Activated CD8-positive, alpha-beta T cell treated with anti-CD3 and anti-CD28 coated beads for 36 hours (primary cell): ENCODE measurements at regions of chr1 and their contacts with region 1.

Region 1: DNA sequence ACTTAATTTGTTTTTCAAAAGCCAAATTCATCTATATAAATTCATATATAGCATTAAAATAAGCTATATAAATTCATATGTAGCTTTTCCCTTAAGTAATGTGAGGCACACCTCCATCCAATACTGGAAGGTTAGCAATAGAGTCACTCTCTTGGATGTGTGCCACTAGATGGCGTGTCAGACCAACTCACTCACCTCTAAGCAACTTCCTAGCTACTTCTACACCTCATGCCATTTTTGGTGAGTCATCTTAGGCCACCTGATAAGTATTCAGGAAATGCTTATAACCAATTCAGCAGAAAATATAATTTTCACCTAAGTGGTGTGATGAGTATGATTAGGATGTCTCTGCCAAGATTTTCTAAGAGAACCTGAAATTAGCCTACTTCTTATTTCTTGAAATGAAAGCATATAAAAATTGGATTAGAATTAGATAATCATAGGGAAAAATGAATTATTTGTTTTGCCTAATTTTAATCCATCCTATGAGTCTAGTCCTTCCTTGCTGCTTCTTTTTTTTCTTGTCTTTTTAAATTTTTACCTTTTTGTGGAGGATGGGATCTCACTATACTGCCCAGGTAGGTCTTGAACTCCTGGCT is 34.4 kb upstream of the TADA1 start:
- DNase-seq: peak; percentile 89
- ATAC-seq: peak; percentile 94
- H3K4me3 Mint-ChIP-seq: no peak overlapping the region
- H3K27ac Mint-ChIP-seq: no peak overlapping the region
- H3K4me1 Mint-ChIP-seq: peaks cover 14% of the 10 kb centered on the region
- H3K27me3 Mint-ChIP-seq: peaks cover 4% of the 10 kb centered on the region
- CTCF ChIP-seq: peak; percentile 82

Region 2: DNA sequence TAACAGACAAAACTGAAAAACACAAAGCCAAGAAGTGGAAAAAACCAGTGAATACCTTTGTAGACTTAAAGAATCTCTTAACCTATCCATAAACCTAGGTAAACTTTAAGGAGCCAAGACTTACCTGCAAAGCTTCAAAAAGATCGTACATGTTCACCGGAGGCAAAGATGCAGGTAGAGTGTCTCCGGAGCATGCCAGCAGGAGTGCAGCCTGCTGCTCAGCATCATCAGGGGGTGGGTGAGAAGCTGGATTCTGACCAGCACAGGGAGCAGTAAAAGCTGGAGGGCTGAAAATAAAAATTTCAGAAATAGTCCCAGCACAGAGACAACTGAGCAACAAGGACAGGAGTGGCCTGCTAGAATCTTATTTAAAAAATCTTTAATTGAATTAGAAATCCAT is 52.5 kb before region 1 on chr1:
- CTCF ChIA-PET with region 1: no interaction called
- POLR2A ChIA-PET with region 1: no interaction called
- intact Hi-C with region 1: no loop called
- DNase-seq: no peak
- ATAC-seq: no peak
- H3K4me3 Mint-ChIP-seq: no peak overlapping the region
- H3K27ac Mint-ChIP-seq: no peak overlapping the region
- H3K4me1 Mint-ChIP-seq: peaks cover 15% of the 10 kb centered on the region
- H3K27me3 Mint-ChIP-seq: no peaks in the 10 kb centered on the region
- CTCF ChIP-seq: no peak

Region 3: GRCh38 chr1:166875734-166876539 is 34.6 kb before region 1 on chr1 and contains the start of gene TADA1:
- CTCF ChIA-PET with region 1: interaction called, 12 read pairs
- POLR2A ChIA-PET with region 1: no interaction called
- intact Hi-C with region 1: no loop called
- DNase-seq: peak; percentile 100
- ATAC-seq: peak; percentile 92
- H3K4me3 Mint-ChIP-seq: peak within 1 kb of the TSS; percentile 92
- H3K27ac Mint-ChIP-seq: peak within 1 kb of the TSS; percentile 99
- H3K4me1 Mint-ChIP-seq: peaks cover 42% of the 10 kb centered on the region
- H3K27me3 Mint-ChIP-seq: peaks cover 4% of the 10 kb centered on the region
- CTCF ChIP-seq: no peak
- total RNA-seq, gene TADA1: 14.3 to 15.7 TPM

Region 4: GRCh38 chr1:166920561-166921475 is 10.3 kb after region 1 on chr1:
- CTCF ChIA-PET with region 1: interaction called, 23 read pairs
- POLR2A ChIA-PET with region 1: no interaction called
- intact Hi-C with region 1: no loop called
- DNase-seq: peak; percentile 12
- ATAC-seq: peak; percentile 27
- H3K4me3 Mint-ChIP-seq: peak overlapping the region; percentile 28
- H3K27ac Mint-ChIP-seq: no peak overlapping the region
- H3K4me1 Mint-ChIP-seq: peaks cover 2% of the 10 kb centered on the region
- H3K27me3 Mint-ChIP-seq: peaks cover 36% of the 10 kb centered on the region
- CTCF ChIP-seq: no peak

Region 5: DNA sequence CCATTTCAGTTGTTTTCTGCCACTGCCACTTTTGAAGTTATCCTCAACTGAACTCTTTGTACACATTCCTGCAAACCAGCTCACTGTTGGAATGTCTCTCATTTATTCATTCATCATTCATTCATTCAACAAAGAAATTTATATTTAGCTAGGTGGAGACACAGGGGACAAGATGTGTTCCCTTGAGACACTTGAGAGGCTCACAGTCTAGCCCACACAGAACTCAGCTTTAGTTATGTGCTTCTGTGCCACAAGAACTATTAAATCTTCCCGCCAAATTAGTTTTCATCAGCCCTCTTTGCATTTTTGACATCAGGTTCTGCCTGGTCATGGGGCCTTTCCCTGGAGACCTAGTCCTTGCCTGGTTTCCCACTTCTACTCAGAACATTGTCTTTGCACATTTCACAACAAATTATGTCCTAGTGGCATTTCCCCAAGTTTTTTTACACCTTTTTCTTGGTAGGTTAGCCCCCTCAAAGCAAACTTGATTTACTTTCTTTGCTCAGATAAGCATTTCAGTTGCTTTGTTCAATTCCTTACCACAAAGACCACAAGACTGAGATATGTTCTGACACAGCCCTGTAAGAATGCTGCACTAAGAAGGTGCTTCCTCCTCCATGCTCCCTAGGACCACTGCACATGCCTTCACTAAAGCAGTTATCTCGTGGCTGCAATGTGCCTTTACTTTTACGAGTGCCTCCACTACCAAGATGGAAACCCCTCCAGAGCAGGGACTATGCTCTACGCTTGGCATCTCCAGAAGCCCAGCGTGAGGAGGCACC is 33.9 kb after region 1 on chr1:
- CTCF ChIA-PET with region 1: interaction called, 13 read pairs
- POLR2A ChIA-PET with region 1: interaction called, 3 read pairs
- intact Hi-C with region 1: no loop called
- DNase-seq: no peak
- ATAC-seq: peak; percentile 82
- H3K4me3 Mint-ChIP-seq: no peak overlapping the region
- H3K27ac Mint-ChIP-seq: no peak overlapping the region
- H3K4me1 Mint-ChIP-seq: peaks cover 31% of the 10 kb centered on the region
- H3K27me3 Mint-ChIP-seq: peaks cover 22% of the 10 kb centered on the region
- CTCF ChIP-seq: no peak

Region 6: DNA sequence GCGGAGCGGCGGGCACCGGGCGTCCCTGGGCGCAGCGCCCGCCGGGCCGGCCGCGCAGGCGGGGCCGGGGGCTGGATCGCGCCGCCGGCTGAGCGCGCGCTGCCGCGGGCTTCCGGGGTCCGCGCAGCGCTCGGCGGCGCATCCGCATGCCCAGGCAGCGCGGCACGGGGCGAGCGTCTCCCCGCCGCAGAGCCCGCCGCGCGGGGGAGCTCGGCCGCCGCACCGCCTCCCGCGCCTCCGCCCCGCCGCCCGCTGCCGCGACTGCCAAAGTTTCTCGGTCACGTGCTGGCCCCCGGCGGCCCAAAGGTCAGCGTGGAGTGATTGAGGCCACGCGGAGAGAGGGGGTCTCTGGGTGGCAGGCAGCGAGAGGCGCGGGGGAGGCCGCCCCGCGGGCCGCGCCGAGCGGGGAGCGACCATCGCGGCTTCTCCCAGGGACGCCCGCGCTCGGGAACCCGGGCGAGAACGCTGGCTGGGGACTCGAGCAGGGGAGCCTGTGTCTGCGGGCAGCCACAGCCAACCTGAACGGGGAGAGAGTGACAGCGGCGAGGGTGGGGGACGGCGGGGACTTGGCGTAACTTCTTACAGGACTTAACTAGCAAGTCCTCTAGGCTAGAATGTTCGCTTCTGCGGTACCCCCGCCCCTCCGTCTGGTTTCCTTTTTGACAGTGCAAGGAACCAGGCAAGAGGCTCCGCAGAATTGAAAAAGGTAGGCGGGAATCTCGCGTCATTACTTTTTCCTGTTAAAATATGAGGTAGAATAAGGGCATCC is 65.0 kb after region 1 on chr1 and contains the start of gene ILDR2:
- CTCF ChIA-PET with region 1: interaction called, 31 read pairs
- POLR2A ChIA-PET with region 1: no interaction called
- intact Hi-C with region 1: loop called (anchors 5 kb)
- DNase-seq: peak; percentile 91
- ATAC-seq: peak; percentile 70
- H3K4me3 Mint-ChIP-seq: peak within 1 kb of the TSS; percentile 89
- H3K27ac Mint-ChIP-seq: peak within 1 kb of the TSS; percentile 90
- H3K4me1 Mint-ChIP-seq: peaks cover 51% of the 10 kb centered on the region
- H3K27me3 Mint-ChIP-seq: peaks cover 26% of the 10 kb centered on the region
- CTCF ChIP-seq: no peak
- total RNA-seq, gene ILDR2: 14.3 to 15.1 TPM

Region 7: DNA sequence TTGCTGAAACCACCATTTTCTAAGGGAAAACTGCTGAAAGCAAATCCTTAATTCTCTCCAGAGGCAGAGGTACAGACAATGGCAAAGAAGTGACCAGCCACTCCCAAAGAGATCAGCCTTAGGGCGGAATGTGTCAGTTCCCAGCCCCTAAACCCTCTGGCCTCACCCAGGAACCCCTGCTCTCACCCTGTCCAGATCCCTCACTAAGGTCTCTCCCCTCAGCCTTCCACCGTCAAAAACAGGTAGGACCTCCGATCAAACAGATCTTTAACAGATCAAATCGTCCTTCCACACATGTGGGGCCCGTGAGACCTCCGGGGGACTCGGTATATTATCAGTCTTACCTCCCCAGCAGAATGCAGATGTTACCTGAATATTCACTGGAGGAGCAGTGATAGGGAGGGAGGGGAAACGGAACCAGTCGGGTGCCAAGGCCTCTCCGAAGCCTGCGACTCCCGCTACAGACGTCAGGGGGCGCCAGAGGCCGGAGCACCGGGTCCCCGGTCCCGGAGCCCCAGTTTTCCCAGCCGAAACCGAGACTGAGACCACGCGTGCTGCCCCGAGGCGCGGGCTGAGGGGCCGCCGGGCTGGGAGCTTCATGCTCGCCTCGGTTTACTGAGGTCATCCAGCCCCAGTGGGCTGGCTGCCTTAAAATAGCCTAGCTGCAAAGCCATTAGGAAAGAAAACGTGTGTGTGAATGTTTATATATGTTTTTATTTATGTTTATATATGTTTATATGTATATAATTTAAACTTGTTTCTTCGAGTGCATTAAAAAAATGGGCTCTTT is 156.0 kb after region 1 on chr1:
- CTCF ChIA-PET with region 1: interaction called, 863 read pairs
- POLR2A ChIA-PET with region 1: no interaction called
- intact Hi-C with region 1: no loop called
- DNase-seq: peak; percentile 83
- ATAC-seq: peak; percentile 99
- H3K4me3 Mint-ChIP-seq: peak overlapping the region; percentile 18
- H3K27ac Mint-ChIP-seq: no peak overlapping the region
- H3K4me1 Mint-ChIP-seq: no peaks in the 10 kb centered on the region
- H3K27me3 Mint-ChIP-seq: no peaks in the 10 kb centered on the region
- CTCF ChIP-seq: peak; percentile 99

Region 8: DNA sequence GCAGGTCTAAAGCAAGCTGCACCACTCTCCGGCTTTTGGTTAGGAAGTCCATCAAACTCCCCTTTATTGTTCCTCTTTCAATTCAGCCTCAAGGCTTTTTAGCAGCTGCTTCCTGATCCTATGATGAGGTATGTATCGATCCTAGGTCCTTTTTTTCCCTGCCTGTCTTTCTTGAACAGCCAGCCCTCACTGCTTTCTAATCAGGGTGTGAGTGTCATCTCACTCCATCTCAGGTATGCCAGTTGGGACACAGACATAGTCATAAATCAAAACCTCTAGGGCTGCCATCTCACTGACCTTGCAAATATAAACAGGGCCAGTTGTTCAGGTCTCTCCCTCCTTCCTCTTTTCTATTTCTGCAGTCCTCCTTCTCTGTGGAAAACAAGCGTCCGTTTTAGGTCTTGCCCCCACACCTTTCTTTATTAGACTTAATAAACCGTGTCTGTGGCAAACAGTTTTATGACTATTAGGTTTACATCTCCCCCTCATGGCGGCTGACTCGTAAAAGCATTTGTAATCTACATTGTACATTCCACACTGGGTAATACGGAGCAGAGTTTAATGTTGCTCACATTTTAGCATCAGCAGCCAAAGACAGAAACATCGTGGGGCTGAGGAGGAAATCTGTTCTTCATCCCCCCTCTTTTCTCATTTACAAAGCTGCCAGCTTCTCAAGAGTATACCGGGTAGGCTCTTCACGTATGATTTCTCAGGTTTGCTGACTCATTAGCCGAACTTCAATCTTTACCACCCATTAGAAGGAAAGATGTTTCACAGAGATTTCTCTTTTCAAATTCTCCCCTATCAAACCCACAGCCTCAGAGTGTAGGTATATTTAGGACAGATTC is 195.0 kb after region 1 on chr1:
- CTCF ChIA-PET with region 1: no interaction called
- POLR2A ChIA-PET with region 1: no interaction called
- intact Hi-C with region 1: no loop called
- DNase-seq: no peak
- ATAC-seq: no peak
- H3K4me3 Mint-ChIP-seq: no peak overlapping the region
- H3K27ac Mint-ChIP-seq: no peak overlapping the region
- H3K4me1 Mint-ChIP-seq: peaks cover 48% of the 10 kb centered on the region
- H3K27me3 Mint-ChIP-seq: no peaks in the 10 kb centered on the region
- CTCF ChIP-seq: no peak

Region 9: GRCh38 chr1:167312871-167313270 is 402.4 kb after region 1 on chr1:
- CTCF ChIA-PET with region 1: no interaction called
- POLR2A ChIA-PET with region 1: no interaction called
- intact Hi-C with region 1: no loop called
- DNase-seq: no peak
- ATAC-seq: peak; percentile 89
- H3K4me3 Mint-ChIP-seq: no peak overlapping the region
- H3K27ac Mint-ChIP-seq: peak overlapping the region; percentile 27
- H3K4me1 Mint-ChIP-seq: peaks cover 12% of the 10 kb centered on the region
- H3K27me3 Mint-ChIP-seq: no peaks in the 10 kb centered on the region
- CTCF ChIP-seq: no peak